GM12878 (cell line): ENCODE measurements at regions of chr19 and their contacts with region 1.

Region 1: GRCh38 chr19:54616821-54617560 is 13.3 kb upstream of the LILRB1 start:
- DNase-seq: peak; percentile 93
- ATAC-seq: peak; percentile 90
- H3K4me3 ChIP-seq: peak overlapping the region; percentile 96
- H3K27ac ChIP-seq: peak overlapping the region; percentile 98
- H3K4me1 ChIP-seq: peaks cover 13% of the 10 kb centered on the region
- H3K27me3 ChIP-seq: no peaks in the 10 kb centered on the region
- CTCF ChIP-seq: no peak
- EP300 ChIP-seq: peak; percentile 91 to 94
- POLR2A ChIP-seq: no peak; the same call in 1 of the 2 replicates
- RAD21 ChIP-seq: 0 out of 2 replicates have a peak, but pooled peaks have one; percentile 5

Region 2: DNA sequence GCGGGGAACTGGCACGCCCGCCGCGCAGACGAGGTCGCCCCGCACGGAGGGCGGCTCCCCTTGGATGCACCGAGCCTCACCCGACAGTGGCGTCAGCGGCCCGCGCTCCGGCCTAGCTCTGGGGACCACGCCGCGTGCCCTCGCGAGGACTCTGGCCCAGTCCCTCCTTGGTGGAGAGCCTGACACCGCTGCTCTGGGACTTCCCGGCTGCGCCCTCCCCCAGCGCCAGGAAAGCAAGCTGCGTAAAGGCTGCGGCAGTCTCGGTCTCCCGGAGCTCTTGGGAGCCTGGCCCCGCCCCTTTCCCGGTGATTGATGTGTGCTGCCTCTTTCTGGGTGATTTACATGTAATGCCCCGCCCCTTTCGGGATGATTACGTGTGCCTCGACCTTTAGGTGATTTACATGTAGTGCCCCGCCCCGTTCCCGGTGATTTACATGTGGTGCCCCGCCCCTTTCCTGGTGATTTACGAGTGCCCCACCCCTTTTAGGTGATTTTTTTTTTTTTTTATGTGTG is 153.4 kb before region 1 on chr19 and contains the start of gene LENG9:
- CTCF ChIA-PET with region 1: no interaction called
- POLR2A ChIA-PET with region 1: interaction called, 5 read pairs
- RAD21 ChIA-PET with region 1: no interaction called
- SMC1A ChIA-PET with region 1: no interaction called
- in situ Hi-C with region 1: no loop called
- intact Hi-C with region 1: loop called (anchors 1 kb)
- DNase-seq: no peak
- ATAC-seq: peak; percentile 66
- H3K4me3 ChIP-seq: peak within 1 kb of the TSS; percentile 76
- H3K27ac ChIP-seq: peak within 1 kb of the TSS; percentile 81
- H3K4me1 ChIP-seq: peaks cover 12% of the 10 kb centered on the region
- H3K27me3 ChIP-seq: no peaks in the 10 kb centered on the region
- CTCF ChIP-seq: no peak
- EP300 ChIP-seq: no peak
- POLR2A ChIP-seq: peak; percentile 68
- RAD21 ChIP-seq: no peak
- polyA plus RNA-seq, gene LENG9: 0.18 to 1.7 TPM

Region 3: GRCh38 chr19:54517483-54517882 is 99.5 kb before region 1 on chr19:
- CTCF ChIA-PET with region 1: interaction called, 4 read pairs
- POLR2A ChIA-PET with region 1: interaction called, 6 read pairs
- RAD21 ChIA-PET with region 1: interaction called, 4 read pairs
- SMC1A ChIA-PET with region 1: interaction called, 5 read pairs
- in situ Hi-C with region 1: no loop called
- intact Hi-C with region 1: loop called (anchors 2 kb)
- DNase-seq: no peak
- ATAC-seq: peak; percentile 35; the same call in 2 of the 3 replicates
- H3K4me3 ChIP-seq: no peak overlapping the region
- H3K27ac ChIP-seq: no peak overlapping the region
- H3K4me1 ChIP-seq: peaks cover 38% of the 10 kb centered on the region
- H3K27me3 ChIP-seq: peaks cover 0 to 1% of the 10 kb centered on the region in 2 experiments; a peak in 1 of 4 replicates
- CTCF ChIP-seq: no peak
- EP300 ChIP-seq: no peak
- POLR2A ChIP-seq: no peak
- RAD21 ChIP-seq: no peak

Region 4: GRCh38 chr19:54551950-54552912 is 64.8 kb before region 1 on chr19:
- CTCF ChIA-PET with region 1: interaction called, 9 read pairs
- POLR2A ChIA-PET with region 1: interaction called, 9 read pairs
- RAD21 ChIA-PET with region 1: interaction called, 17 read pairs
- SMC1A ChIA-PET with region 1: interaction called, 19 read pairs
- in situ Hi-C with region 1: no loop called
- intact Hi-C with region 1: loop called (anchors 5 kb)
- DNase-seq: peak; percentile 40
- ATAC-seq: peak; percentile 87
- H3K4me3 ChIP-seq: peak overlapping the region; percentile 48; the same call in 1 of the 2 replicates
- H3K27ac ChIP-seq: peak overlapping the region; percentile 33
- H3K4me1 ChIP-seq: peaks cover 27% of the 10 kb centered on the region
- H3K27me3 ChIP-seq: no peaks in the 10 kb centered on the region
- CTCF ChIP-seq: no peak
- EP300 ChIP-seq: no peak
- POLR2A ChIP-seq: no peak
- RAD21 ChIP-seq: no peak

Region 5: DNA sequence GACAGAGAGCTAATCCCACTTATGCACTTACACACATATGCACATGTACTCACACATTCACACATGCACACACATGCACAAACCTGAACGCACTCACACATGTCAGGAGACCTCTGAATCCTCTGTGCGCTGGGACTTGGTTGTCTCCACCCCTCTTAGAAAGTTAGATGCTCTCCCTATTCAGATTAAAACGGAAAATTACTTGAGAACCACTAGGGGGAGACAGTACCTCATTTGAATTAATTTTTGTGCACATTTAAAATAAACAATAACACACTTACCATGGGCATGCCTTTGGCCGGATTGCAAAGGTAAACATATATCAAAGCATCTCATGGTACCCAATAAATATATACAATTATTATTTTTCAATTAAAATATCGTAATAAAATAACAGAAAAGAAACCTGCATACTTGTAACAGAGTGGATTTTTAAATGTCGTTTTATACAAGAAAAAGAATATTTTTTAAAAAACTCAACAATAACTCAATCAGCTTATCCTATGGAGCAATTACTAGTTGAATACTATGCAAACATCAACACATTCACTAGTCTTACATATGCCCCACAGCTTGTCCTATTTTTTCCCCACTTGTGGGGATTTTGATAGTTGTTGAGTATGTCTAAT is 36.3 kb after region 1 on chr19:
- CTCF ChIA-PET with region 1: interaction called, 54 read pairs
- POLR2A ChIA-PET with region 1: interaction called, 3 read pairs
- RAD21 ChIA-PET with region 1: interaction called, 5 read pairs
- SMC1A ChIA-PET with region 1: interaction called, 27 read pairs
- in situ Hi-C with region 1: no loop called
- intact Hi-C with region 1: no loop called
- DNase-seq: no peak
- ATAC-seq: peak; percentile 76
- H3K4me3 ChIP-seq: no peak overlapping the region
- H3K27ac ChIP-seq: no peak overlapping the region
- H3K4me1 ChIP-seq: peaks cover 5% of the 10 kb centered on the region
- H3K27me3 ChIP-seq: no peaks in the 10 kb centered on the region
- CTCF ChIP-seq: peak; percentile 51 to 67 (median 63)
- EP300 ChIP-seq: no peak
- POLR2A ChIP-seq: no peak
- RAD21 ChIP-seq: peak; percentile 75

Region 6: GRCh38 chr19:54662730-54663129 is 45.7 kb after region 1 on chr19 and contains the start of gene LILRB4:
- CTCF ChIA-PET with region 1: interaction called, 4 read pairs
- POLR2A ChIA-PET with region 1: interaction called, 5 read pairs
- RAD21 ChIA-PET with region 1: interaction called, 14 read pairs
- SMC1A ChIA-PET with region 1: interaction called, 12 read pairs
- in situ Hi-C with region 1: no loop called
- intact Hi-C with region 1: no loop called
- DNase-seq: no peak
- ATAC-seq: peak; percentile 79
- H3K4me3 ChIP-seq: peak within 1 kb of the TSS; percentile 49
- H3K27ac ChIP-seq: peak within 1 kb of the TSS; percentile 57
- H3K4me1 ChIP-seq: peaks cover 34% of the 10 kb centered on the region
- H3K27me3 ChIP-seq: no peaks in the 10 kb centered on the region
- CTCF ChIP-seq: no peak
- EP300 ChIP-seq: no peak
- POLR2A ChIP-seq: no peak; the same call in 1 of the 2 replicates
- RAD21 ChIP-seq: no peak
- polyA plus RNA-seq, gene LILRB4: 2.0 to 4.9 TPM

Region 7: DNA sequence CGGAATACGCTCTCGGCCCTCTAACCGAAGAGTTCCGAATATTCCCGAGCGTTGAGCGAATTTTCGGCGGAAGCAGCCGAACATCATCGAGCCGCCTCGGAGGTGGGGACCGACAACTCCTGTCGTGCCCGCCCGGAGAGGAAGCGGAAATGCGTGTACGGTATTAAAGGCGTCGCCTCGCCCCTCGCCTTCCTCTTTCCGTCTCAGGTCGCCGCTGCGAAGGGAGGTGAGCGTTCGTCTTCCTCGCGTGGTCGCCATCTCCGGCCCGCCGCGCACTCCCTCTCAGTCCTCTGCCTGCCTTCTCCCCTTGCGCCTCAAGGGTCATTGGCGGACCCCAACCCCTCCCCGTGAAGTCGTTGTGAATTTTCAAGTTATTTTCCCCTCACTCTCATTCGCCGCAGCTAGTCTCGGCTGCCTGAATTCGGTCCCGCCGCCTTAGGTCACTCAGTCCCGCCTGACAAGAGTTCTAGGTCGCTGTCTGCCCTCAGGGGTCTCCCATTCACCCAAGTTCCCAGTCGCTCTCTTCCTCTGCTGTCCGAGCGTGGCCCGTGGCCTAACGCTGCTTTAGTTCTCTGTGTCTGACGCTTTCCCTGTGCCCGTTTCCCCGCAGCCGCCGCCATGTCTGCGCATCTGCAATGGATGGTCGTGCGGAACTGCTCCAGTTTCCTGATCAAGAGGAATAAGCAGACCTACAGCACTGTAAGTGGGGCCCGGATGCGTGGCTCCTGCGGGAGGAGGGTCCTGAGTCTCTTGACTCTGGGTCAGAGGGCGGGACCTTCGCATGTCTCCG is 768.9 kb after region 1 on chr19 and contains the start of gene RPL28:
- CTCF ChIA-PET with region 1: no interaction called
- POLR2A ChIA-PET with region 1: no interaction called
- RAD21 ChIA-PET with region 1: no interaction called
- SMC1A ChIA-PET with region 1: no interaction called
- in situ Hi-C with region 1: no loop called
- intact Hi-C with region 1: loop called (anchors 10 kb)
- DNase-seq: peak; percentile 93
- ATAC-seq: peak; percentile 80
- H3K4me3 ChIP-seq: peak within 1 kb of the TSS; percentile 94
- H3K27ac ChIP-seq: peak within 1 kb of the TSS; percentile 90
- H3K4me1 ChIP-seq: peaks cover 28% of the 10 kb centered on the region
- H3K27me3 ChIP-seq: no peaks in the 10 kb centered on the region
- CTCF ChIP-seq: no peak
- EP300 ChIP-seq: no peak
- POLR2A ChIP-seq: peak; percentile 100
- RAD21 ChIP-seq: no peak
- polyA plus RNA-seq, gene RPL28: 290 to 479 TPM